Posterior vena cava (tissue), 2 donors: ENCODE measurements at regions of chr1 and their contacts with region 1.

Region 1: GRCh38 chr1:75134647-75135572 is 722 bp downstream of the LHX8 start:
- DNase-seq: no peak

Region 2: GRCh38 chr1:74908797-74909196 is 226.1 kb before region 1 on chr1:
- intact Hi-C with region 1: loop called in 1 of 2 experiments (anchors 5 kb)
- DNase-seq: no peak